HepG2 (cell line): ENCODE measurements at regions of chr2 and their contacts with region 1.

Region 1: DNA sequence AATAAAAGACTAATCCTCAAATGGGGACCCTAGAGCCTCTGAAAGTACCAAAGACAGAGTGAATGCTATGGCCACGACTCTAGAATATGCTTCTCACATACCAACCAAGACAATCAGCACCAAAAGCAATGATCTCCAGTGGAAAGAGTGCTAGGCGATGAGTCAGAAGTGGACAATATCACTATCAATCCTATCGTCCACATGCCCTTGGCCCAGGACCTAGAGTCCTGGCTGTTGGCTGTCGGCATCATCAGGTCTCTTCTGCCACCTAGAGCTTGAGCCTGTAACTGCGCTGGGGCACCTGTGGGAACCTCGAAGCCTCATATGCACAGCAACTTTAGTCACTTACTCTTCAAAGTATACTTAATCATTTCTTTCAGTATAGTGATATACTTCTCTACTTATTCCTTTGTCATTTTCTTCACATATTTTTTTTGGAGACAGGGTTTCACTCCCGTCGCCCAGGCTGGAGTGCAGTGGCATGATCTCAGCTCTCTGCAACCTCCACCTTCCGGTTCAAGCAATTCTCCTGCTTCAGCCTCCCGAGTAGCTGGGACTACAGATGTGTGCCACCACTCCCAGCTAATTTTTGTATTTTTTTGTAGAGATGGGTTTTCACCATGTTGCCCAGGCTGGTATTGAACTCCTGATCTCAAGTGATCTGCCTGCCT is 29.7 kb downstream of the NOL10 start:
- DNase-seq: peak; percentile 48
- ATAC-seq: peak; percentile 93
- H3K4me3 ChIP-seq: no peak overlapping the region
- H3K27ac ChIP-seq: no peak overlapping the region
- H3K4me1 ChIP-seq: no peaks in the 10 kb centered on the region
- H3K27me3 ChIP-seq: no peaks in the 10 kb centered on the region
- CTCF ChIP-seq: peak; percentile 88
- EP300 ChIP-seq: no peak
- POLR2A ChIP-seq: no peak
- RAD21 ChIP-seq: peak; percentile 37; the same call in 1 of the 2 replicates

Region 2: GRCh38 chr2:10467401-10467800 is 192.6 kb before region 1 on chr2:
- CTCF ChIA-PET with region 1: no interaction called
- POLR2A ChIA-PET with region 1: no interaction called
- in situ Hi-C with region 1: loop called (anchors 10 kb)
- intact Hi-C with region 1: loop called (anchors 10 kb)
- DNase-seq: no peak
- ATAC-seq: peak; percentile 79
- H3K4me3 ChIP-seq: no peak overlapping the region
- H3K27ac ChIP-seq: no peak overlapping the region
- H3K4me1 ChIP-seq: peaks cover 7% of the 10 kb centered on the region; the same call in 1 of the 2 replicates
- H3K27me3 ChIP-seq: peaks cover 4 to 54% of the 10 kb centered on the region in 2 experiments; a peak in 4 of 5 replicates
- CTCF ChIP-seq: peak; percentile 62
- EP300 ChIP-seq: no peak
- POLR2A ChIP-seq: no peak
- RAD21 ChIP-seq: no peak

Region 3: DNA sequence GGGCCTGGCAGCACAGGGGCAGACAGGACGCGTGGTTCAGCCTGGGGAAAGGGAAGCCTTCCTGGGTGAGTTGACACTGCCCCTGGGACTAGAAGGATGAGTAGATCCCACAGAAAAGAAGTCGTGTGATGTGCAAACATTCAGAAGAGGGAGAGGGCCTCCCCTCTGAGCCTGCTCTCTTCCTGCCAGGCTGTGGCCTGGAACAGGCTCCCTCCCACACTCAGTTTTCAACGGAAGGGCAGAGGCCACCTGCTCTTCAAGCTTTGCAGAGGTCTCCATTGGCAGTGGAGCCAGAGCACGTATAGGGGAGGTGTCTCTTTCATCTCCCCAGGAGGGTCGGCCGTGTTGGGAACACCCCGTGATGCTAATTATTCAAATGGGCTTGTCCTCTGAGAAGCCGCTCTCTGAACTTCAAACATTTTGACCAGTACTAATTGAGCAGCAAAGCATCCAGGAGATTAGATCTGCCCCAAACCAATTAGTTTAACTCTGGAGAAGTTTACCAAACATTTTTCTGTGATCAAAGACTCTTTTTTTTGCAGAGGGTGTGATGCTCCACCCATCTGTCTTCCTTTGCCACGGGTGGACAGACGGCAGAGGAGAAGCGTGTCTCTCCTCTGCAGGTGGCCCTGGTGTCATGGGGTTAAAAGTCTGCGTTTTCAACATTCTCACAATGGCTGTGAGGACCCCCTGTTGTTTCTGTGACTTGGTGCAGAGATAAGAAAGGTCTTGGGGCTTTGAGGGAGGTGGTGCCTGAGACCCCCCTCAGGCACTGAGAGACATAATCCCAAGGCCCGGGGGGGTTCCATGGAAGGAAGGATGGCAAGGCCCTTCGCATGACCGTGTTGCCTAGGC is 182.4 kb before region 1 on chr2:
- CTCF ChIA-PET with region 1: no interaction called
- POLR2A ChIA-PET with region 1: no interaction called
- in situ Hi-C with region 1: loop called (anchors 10 kb)
- intact Hi-C with region 1: no loop called
- DNase-seq: no peak
- ATAC-seq: peak; percentile 34
- H3K4me3 ChIP-seq: no peak overlapping the region; a peak in 1 of 6 replicates
- H3K27ac ChIP-seq: no peak overlapping the region
- H3K4me1 ChIP-seq: peaks cover 72% of the 10 kb centered on the region
- H3K27me3 ChIP-seq: peaks cover 19 to 60% of the 10 kb centered on the region in 2 experiments; a peak in 4 of 5 replicates
- CTCF ChIP-seq: no peak
- EP300 ChIP-seq: no peak
- POLR2A ChIP-seq: no peak
- RAD21 ChIP-seq: no peak

Region 4: GRCh38 chr2:10557506-10558265 is 102.3 kb before region 1 on chr2:
- CTCF ChIA-PET with region 1: no interaction called
- POLR2A ChIA-PET with region 1: no interaction called
- in situ Hi-C with region 1: no loop called
- intact Hi-C with region 1: loop called (anchors 2 kb)
- DNase-seq: no peak
- ATAC-seq: peak; percentile 85
- H3K4me3 ChIP-seq: no peak overlapping the region
- H3K27ac ChIP-seq: no peak overlapping the region
- H3K4me1 ChIP-seq: no peaks in the 10 kb centered on the region
- H3K27me3 ChIP-seq: peaks cover 8 to 13% of the 10 kb centered on the region in 2 experiments; a peak in 4 of 5 replicates
- CTCF ChIP-seq: peak; percentile 54
- EP300 ChIP-seq: no peak
- POLR2A ChIP-seq: no peak
- RAD21 ChIP-seq: 0 out of 2 replicates have a peak, but pooled peaks have one; percentile 21